ENCODE measurements at regions of chr7 and their contacts with region 1.

Region 1: GRCh38 chr7:116809636-116810266 is 52.6 kb upstream of the CAPZA2 start:
- DNase-seq: no peak
- H3K4me3 ChIP-seq: no peak overlapping the region
- H3K27ac ChIP-seq: no peak overlapping the region
- H3K4me1 ChIP-seq: peaks cover 3 to 4% of the 10 kb centered on the region in 2 donors
- H3K27me3 ChIP-seq: no peaks in the 10 kb centered on the region
- CTCF ChIP-seq: peak in 4 of 6 experiments; percentile 43 to 84 (median 66)
- POLR2A ChIP-seq: no peak

Region 2: DNA sequence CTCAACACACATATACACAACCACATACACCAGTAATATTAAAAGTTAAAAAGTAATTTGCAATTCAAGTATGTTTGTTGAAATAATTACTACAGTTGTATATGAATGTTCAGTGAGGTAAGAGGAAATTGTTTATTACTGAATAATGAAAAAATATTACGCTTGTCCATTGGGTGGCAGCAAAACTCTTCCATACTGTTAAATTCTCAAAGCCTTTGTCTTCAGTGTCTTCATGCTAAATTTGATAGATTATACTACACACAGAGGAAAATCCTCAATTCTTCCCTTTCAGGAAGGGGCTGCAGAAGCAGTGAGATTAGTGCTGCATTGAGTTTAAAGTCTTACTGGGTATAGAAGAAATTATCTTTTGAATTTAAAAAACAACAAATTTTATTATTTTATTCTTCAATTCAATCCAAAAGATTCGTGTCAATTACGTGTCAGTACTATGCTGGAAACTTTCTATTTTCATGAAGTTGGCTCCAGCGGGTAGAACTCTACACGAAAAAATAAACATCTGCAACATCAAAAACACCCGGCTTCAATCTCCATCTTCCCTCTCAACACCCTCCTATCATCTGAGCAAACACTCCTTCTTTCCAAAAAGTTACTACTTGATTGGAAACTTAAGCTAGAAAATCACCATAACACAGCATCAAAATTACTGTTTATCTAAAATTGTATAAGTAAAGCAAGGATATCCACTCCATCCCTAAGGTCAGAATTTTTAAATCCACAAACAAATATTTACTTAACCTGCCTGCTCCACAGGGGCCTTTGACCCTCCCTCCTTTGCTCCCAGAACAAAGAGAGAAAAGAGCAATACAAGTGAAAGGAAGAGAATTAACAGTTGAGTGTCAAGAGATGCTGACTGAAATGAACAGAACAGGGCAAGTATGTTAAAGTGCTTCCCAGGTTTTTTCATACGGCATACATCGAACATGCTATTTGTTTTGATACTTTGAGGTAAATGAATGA is 636.4 kb before region 1 on chr7:
- intact Hi-C with region 1: loop called (anchors 10 kb)
- DNase-seq: no peak
- H3K4me3 ChIP-seq: no peak overlapping the region
- H3K27ac ChIP-seq: no peak overlapping the region
- H3K4me1 ChIP-seq: peaks cover 0 to 10% of the 10 kb centered on the region in 2 donors
- H3K27me3 ChIP-seq: no peaks in the 10 kb centered on the region
- CTCF ChIP-seq: peak in 5 of 6 experiments; percentile 17 to 80 (median 48)
- POLR2A ChIP-seq: no peak

Region 3: DNA sequence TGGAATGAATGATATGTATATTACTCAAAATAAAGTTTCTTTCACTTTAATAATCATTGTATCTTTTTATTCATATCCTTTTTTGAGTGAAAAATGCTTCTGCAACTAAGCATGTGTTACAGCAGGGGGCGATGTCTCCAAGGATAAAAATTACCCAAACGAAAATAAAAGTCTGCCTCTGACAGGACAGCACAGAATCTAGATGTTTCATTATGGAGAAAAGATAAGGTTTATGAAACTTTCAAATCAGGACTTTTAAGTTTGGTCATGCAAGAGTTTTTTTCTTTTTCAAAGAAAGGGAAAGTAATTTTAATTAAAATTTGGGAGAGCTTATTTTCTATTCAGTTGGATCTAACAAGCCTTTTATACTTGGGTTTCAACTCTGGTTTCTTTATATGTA is 551.0 kb before region 1 on chr7:
- intact Hi-C with region 1: loop called (anchors 10 kb)
- DNase-seq: peak in 1 of 2 donors; percentile 27
- H3K4me3 ChIP-seq: no peak overlapping the region
- H3K27ac ChIP-seq: peak overlapping the region; percentile 37 to 79 (median 64)
- H3K4me1 ChIP-seq: peaks cover 18 to 24% of the 10 kb centered on the region in 2 donors
- H3K27me3 ChIP-seq: no peaks in the 10 kb centered on the region
- CTCF ChIP-seq: peak; percentile 50 to 95 (median 80)
- POLR2A ChIP-seq: no peak

Region 4: GRCh38 chr7:116588641-116589594 is 220.8 kb before region 1 on chr7:
- intact Hi-C with region 1: loop called (anchors 2 kb)
- DNase-seq: no peak
- H3K4me3 ChIP-seq: no peak overlapping the region
- H3K27ac ChIP-seq: peak overlapping the region in 1 of 3 donors; percentile 10
- H3K4me1 ChIP-seq: peaks cover 31 to 37% of the 10 kb centered on the region in 2 donors
- H3K27me3 ChIP-seq: no peaks in the 10 kb centered on the region
- CTCF ChIP-seq: peak; percentile 11 to 92 (median 61)
- POLR2A ChIP-seq: no peak

Region 5: DNA sequence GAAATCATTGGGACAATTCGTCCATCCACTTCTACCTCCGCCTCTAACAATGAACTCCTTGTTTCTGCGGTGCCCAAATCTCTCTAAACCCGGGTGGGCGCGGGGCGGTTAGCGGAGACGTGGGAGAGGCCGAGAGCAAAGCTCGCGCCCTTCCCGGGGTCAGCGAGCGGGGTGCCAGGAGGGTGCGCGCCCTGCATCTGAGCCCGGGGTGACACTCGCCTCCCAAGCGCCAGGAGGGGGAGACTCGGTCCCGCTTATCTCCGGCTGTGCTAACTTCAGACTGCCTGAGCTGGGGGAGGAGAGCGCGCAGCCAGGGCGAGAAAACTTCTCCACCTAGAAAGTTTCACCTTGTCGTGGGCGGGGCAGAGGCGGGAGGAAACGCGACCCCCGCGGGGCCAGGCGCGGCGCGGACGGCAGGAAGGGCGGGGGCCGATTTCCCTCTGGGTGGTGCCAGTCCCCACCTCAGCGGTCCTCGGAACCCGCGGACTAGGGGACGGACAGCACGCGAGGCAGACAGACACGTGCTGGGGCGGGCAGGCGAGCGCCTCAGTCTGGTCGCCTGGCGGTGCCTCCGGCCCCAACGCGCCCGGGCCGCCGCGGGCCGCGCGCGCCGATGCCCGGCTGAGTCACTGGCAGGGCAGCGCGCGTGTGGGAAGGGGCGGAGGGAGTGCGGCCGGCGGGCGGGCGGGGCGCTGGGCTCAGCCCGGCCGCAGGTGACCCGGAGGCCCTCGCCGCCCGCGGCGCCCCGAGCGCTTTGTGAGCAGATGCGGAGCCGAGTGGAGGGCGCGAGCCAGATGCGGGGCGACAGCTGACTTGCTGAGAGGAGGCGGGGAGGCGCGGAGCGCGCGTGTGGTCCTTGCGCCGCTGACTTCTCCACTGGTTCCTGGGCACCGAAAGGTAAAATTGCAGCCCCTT is 137.8 kb before region 1 on chr7 and contains the start of gene MET:
- intact Hi-C with region 1: loop called (anchors 2 kb)
- DNase-seq: peak; percentile 91
- H3K4me3 ChIP-seq: peak within 1 kb of the TSS; percentile 5 to 56 (median 49)
- H3K27ac ChIP-seq: peak within 1 kb of the TSS; percentile 75 to 86 (median 79)
- H3K4me1 ChIP-seq: peaks cover 8 to 13% of the 10 kb centered on the region in 2 donors
- H3K27me3 ChIP-seq: no peaks in the 10 kb centered on the region
- CTCF ChIP-seq: peak; percentile 12 to 89 (median 68)
- POLR2A ChIP-seq: peak in 1 of 2 donors; percentile 74
- total RNA-seq, gene MET: 41.5 to 59.6 (median 52.7) TPM